Vagina (tissue), 2 donors: ENCODE measurements at regions of chr11 and their contacts with region 1.

Region 1: DNA sequence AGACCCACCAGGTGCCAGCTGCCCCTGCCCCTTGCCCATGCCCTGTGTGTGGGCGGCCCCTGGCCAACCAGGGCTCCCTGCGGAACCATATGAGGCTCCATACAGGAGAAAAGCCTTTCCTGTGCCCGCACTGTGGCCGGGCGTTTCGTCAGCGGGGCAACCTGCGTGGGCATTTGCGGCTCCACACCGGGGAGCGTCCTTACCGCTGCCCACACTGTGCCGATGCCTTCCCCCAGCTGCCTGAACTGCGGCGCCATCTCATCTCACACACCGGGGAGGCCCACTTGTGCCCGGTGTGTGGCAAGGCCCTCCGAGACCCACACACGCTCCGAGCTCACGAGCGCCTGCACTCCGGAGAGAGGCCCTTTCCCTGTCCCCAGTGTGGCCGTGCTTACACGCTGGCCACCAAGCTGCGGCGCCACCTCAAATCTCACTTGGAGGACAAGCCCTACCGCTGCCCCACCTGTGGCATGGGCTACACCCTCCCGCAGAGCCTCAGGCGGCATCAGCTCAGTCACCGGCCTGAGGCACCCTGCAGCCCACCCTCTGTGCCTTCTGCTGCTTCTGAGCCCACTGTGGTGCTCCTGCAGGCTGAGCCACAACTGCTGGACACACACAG is 4.3 kb downstream of the ZNF408 start:
- DNase-seq: no peak
- H3K4me3 ChIP-seq: no peak overlapping the region
- H3K27ac ChIP-seq: no peak overlapping the region
- H3K4me1 ChIP-seq: peaks cover 19% of the 10 kb centered on the region
- H3K27me3 ChIP-seq: no peaks in the 10 kb centered on the region
- CTCF ChIP-seq: no peak
- POLR2A ChIP-seq: no peak

Region 2: DNA sequence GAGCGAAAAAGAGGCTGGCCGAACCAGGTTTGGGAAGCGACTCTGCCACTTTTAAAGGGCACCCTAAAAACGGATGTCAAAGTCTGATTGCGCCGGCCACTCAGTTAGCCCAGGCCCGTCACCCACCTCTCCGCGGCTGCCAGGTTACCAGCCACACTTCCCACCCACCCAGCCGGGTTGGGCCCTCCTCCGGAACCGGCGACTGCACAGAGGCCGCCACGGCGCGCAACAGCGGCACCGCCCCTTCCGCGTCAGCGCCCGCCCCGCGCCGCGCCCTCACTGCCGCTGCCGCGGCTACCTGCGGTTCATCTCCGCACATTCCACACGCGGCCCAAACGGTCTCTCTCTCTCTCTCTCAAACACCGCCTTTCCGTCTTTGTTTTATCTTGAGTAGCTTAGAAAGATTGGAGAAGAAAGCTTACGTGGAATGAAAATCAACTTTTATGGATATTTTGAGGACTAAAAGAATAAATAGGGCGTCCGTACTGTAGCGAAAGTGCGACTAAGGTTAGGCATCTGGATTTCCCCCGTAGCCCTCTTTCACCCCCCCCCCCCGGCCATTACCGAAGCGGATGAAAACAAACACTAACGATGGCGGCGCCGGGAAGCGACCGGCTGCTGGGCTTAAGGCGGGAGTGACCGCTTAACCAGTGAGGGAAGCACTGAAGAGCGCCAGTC is 88.0 kb before region 1 on chr11 and contains the starts of genes ATG13 and HARBI1:
- intact Hi-C with region 1: loop called (anchors 5 kb)
- DNase-seq: peak in 1 of 2 donors; percentile 89
- H3K4me3 ChIP-seq: peak within 1 kb of the TSS; percentile 73 to 89
- H3K27ac ChIP-seq: peak within 1 kb of the TSS; percentile 89
- H3K4me1 ChIP-seq: peaks cover 30% of the 10 kb centered on the region
- H3K27me3 ChIP-seq: no peaks in the 10 kb centered on the region
- CTCF ChIP-seq: no peak
- POLR2A ChIP-seq: peak in 1 of 2 donors; percentile 15
- total RNA-seq, gene ATG13: 39.0 TPM
- total RNA-seq, gene HARBI1: 1.5 TPM

Region 3: DNA sequence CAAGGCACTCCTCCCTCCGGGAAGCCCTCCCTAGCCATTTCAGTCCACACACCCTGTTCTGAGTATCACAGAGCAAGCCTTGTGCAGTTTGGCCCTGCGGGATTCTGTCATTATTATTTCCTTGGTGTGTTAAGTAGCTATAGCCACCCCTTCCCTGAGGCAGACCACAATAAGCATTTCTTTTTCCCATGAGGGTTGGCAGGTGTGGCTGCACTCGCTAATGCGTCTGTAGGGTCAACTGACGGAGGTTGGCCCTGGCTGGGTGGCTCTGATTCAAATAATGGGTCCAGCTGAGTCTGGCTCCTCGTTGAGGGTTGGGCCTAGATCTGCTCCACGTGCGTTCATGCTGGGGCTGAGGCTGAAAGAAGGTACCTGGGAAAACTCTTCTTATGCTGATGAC is 18.9 kb after region 1 on chr11:
- intact Hi-C with region 1: no loop called
- DNase-seq: no peak
- H3K4me3 ChIP-seq: no peak overlapping the region
- H3K27ac ChIP-seq: no peak overlapping the region
- H3K4me1 ChIP-seq: no peaks in the 10 kb centered on the region
- H3K27me3 ChIP-seq: no peaks in the 10 kb centered on the region
- CTCF ChIP-seq: no peak
- POLR2A ChIP-seq: no peak